Activated CD8-positive, alpha-beta T cell treated with anti-CD3 and anti-CD28 coated beads, Interleukin-2, amount 10 ng/mL, durations not matched to agents 7 days and 5 days (primary cell): ENCODE measurements at regions of chr2 and their contacts with region 1.

Region 1: GRCh38 chr2:240513549-240514287 is 44.1 kb downstream of the ANKMY1 start:
- DNase-seq: peak; percentile 88
- ATAC-seq: peak; percentile 98
- H3K4me3 Mint-ChIP-seq: no peak overlapping the region
- H3K27ac Mint-ChIP-seq: peak overlapping the region; percentile 47
- H3K4me1 Mint-ChIP-seq: peaks cover 7% of the 10 kb centered on the region
- H3K27me3 Mint-ChIP-seq: no peaks in the 10 kb centered on the region

Region 2: GRCh38 chr2:240560480-240561326 is 47.0 kb after region 1 on chr2:
- CTCF ChIA-PET with region 1: interaction called, 43 read pairs
- POLR2A ChIA-PET with region 1: interaction called, 7 read pairs
- DNase-seq: peak; percentile 100
- ATAC-seq: peak; percentile 61
- H3K4me3 Mint-ChIP-seq: peak overlapping the region; percentile 85
- H3K27ac Mint-ChIP-seq: peak overlapping the region; percentile 81
- H3K4me1 Mint-ChIP-seq: peaks cover 77% of the 10 kb centered on the region
- H3K27me3 Mint-ChIP-seq: no peaks in the 10 kb centered on the region

Region 3: GRCh38 chr2:240579771-240580614 is 66.3 kb after region 1 on chr2:
- CTCF ChIA-PET with region 1: interaction called, 15 read pairs
- POLR2A ChIA-PET with region 1: no interaction called
- DNase-seq: peak; percentile 77
- ATAC-seq: peak; percentile 81
- H3K4me3 Mint-ChIP-seq: no peak overlapping the region
- H3K27ac Mint-ChIP-seq: peak overlapping the region; percentile 74
- H3K4me1 Mint-ChIP-seq: peaks cover 41% of the 10 kb centered on the region
- H3K27me3 Mint-ChIP-seq: no peaks in the 10 kb centered on the region

Region 4: GRCh38 chr2:240624950-240625621 is 111.4 kb after region 1 on chr2 and contains the start of gene GPR35:
- CTCF ChIA-PET with region 1: interaction called, 10 read pairs
- POLR2A ChIA-PET with region 1: no interaction called
- DNase-seq: peak; percentile 89
- ATAC-seq: peak; percentile 60
- H3K4me3 Mint-ChIP-seq: peak within 1 kb of the TSS; percentile 78
- H3K27ac Mint-ChIP-seq: peak within 1 kb of the TSS; percentile 95
- H3K4me1 Mint-ChIP-seq: peaks cover 73% of the 10 kb centered on the region
- H3K27me3 Mint-ChIP-seq: no peaks in the 10 kb centered on the region
- total RNA-seq, gene GPR35: 21.6 to 23.8 TPM